A549 (cell line): ENCODE measurements at regions of chr1 and their contacts with region 1.

Region 1: GRCh38 chr1:47738560-47739182 is 258.5 kb downstream of the TRABD2B start:
- DNase-seq: peak; percentile 12 to 38
- ATAC-seq: peak; percentile 71 to 84
- H3K4me3 ChIP-seq: no peak overlapping the region
- H3K27ac ChIP-seq: no peak overlapping the region
- H3K4me1 ChIP-seq: no peaks in the 10 kb centered on the region
- CTCF ChIP-seq: peak; percentile 46
- EP300 ChIP-seq: no peak
- POLR2A ChIP-seq: no peak
- RAD21 ChIP-seq: peak; percentile 56 to 61

Region 2: DNA sequence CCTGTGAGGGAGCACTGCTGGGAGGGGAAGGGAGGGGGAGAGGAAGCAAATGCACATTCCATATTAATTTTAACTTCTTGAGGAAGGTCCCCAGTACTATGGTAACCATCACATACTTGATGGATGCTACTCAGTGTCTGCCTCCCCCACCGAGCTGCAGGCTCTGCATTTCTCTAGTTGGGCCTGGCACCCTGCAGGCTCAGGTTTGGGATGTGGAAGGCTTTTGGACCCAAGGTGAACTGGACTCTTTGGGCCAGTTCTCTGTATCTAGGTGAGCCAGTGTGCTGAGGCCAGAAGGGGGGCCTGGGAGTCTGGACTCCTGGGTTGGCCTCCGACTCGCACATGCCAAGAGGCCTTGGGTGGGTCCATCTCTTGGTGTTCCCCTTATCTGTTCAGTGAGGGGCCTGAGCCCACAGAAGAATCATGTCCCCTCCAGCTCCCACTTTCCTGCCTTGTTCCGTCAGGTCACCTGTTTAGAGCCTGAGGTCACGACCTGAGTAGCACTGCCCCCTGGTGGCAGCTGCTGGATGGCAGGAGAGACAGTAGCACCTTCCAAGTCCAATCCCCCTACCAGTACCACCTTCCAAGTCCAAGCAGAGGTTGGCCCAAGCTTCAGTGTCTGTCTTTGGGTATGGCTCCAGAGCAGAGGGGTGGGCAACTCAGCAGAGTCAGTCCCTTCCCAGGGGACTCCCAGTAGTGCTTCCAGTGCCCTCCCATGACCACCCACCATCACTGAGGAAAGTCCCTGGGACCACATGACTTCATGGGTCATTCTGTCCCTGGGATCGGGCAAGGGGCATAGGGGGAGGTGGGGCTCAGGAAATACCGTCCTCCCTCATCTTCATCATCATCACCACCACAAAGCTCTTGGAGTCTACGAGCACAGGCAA is 16.7 kb after region 1 on chr1:
- CTCF ChIA-PET with region 1: interaction called, 19 read pairs
- POLR2A ChIA-PET with region 1: no interaction called
- DNase-seq: peak; percentile 13 to 43
- ATAC-seq: peak; percentile 67 to 88; a peak in 4 of 6 replicates
- H3K4me3 ChIP-seq: no peak overlapping the region
- H3K27ac ChIP-seq: no peak overlapping the region
- H3K4me1 ChIP-seq: no peaks in the 10 kb centered on the region
- CTCF ChIP-seq: peak; percentile 42
- EP300 ChIP-seq: no peak
- POLR2A ChIP-seq: no peak
- RAD21 ChIP-seq: peak; percentile 14 to 24; a peak in 2 of 5 replicates